ENCODE measurements at regions of chr2 and their contacts with region 1.

Region 1: GRCh38 chr2:58762176-58762781 is 521.2 kb upstream of the FANCL start:
- ATAC-seq: peak; percentile 77 to 99 (median 90)
- H3K4me3 ChIP-seq: no peak overlapping the region
- H3K27ac ChIP-seq: no peak overlapping the region
- H3K4me1 ChIP-seq: no peaks in the 10 kb centered on the region

Region 2: GRCh38 chr2:60550178-60550983 is 1788.1 kb after region 1 on chr2:
- in situ Hi-C with region 1: loop called in 1 of 9 experiments (anchors 25 kb)
- ATAC-seq: peak; percentile 54 to 75 (median 60)
- H3K4me3 ChIP-seq: peak overlapping the region; percentile 72 to 94 (median 80)
- H3K27ac ChIP-seq: peak overlapping the region; percentile 67 to 75
- H3K4me1 ChIP-seq: peaks cover 0 to 29% of the 10 kb centered on the region in 2 donors